ENCODE measurements at regions of chr2 and their contacts with region 1.

Region 1: GRCh38 chr2:127526149-127527000 is at the start of gene IWS1:
- DNase-seq: peak; percentile 96
- H3K4me3 Mint-ChIP-seq: peak within 1 kb of the TSS; percentile 86
- H3K27ac Mint-ChIP-seq: peak within 1 kb of the TSS; percentile 90
- H3K4me1 Mint-ChIP-seq: peaks cover 27% of the 10 kb centered on the region
- H3K27me3 Mint-ChIP-seq: no peaks in the 10 kb centered on the region
- total RNA-seq, gene IWS1: 52.1 to 52.5 TPM

Region 2: GRCh38 chr2:127106951-127107621 is 419.3 kb before region 1 on chr2 and contains the start of gene BIN1:
- CTCF ChIA-PET with region 1: no interaction called
- intact Hi-C with region 1: loop called (anchors 1 kb)
- DNase-seq: peak; percentile 83
- H3K4me3 Mint-ChIP-seq: peak within 1 kb of the TSS; percentile 72
- H3K27ac Mint-ChIP-seq: no peak within 1 kb of the TSS
- H3K4me1 Mint-ChIP-seq: peaks cover 3% of the 10 kb centered on the region
- H3K27me3 Mint-ChIP-seq: peaks cover 9% of the 10 kb centered on the region
- total RNA-seq, gene BIN1: 50.4 to 51.1 TPM

Region 3: GRCh38 chr2:127387655-127388422 is 138.5 kb before region 1 on chr2 and contains the start of gene MAP3K2:
- CTCF ChIA-PET with region 1: no interaction called
- intact Hi-C with region 1: loop called (anchors 1 kb)
- DNase-seq: peak; percentile 92
- H3K4me3 Mint-ChIP-seq: peak within 1 kb of the TSS; percentile 85
- H3K27ac Mint-ChIP-seq: peak within 1 kb of the TSS; percentile 92
- H3K4me1 Mint-ChIP-seq: peaks cover 69% of the 10 kb centered on the region
- H3K27me3 Mint-ChIP-seq: no peaks in the 10 kb centered on the region
- total RNA-seq, gene MAP3K2: 27.1 to 27.4 TPM

Region 4: GRCh38 chr2:127471286-127471988 is 54.9 kb before region 1 on chr2:
- CTCF ChIA-PET with region 1: no interaction called
- intact Hi-C with region 1: no loop called
- DNase-seq: no peak
- H3K4me3 Mint-ChIP-seq: no peak overlapping the region
- H3K27ac Mint-ChIP-seq: no peak overlapping the region
- H3K4me1 Mint-ChIP-seq: no peaks in the 10 kb centered on the region
- H3K27me3 Mint-ChIP-seq: no peaks in the 10 kb centered on the region

Region 5: GRCh38 chr2:127640082-127641072 is 114.0 kb after region 1 on chr2:
- CTCF ChIA-PET with region 1: no interaction called
- intact Hi-C with region 1: loop called (anchors 1 kb)
- DNase-seq: peak; percentile 65
- H3K4me3 Mint-ChIP-seq: peak overlapping the region; percentile 65
- H3K27ac Mint-ChIP-seq: peak overlapping the region; percentile 71
- H3K4me1 Mint-ChIP-seq: peaks cover 54% of the 10 kb centered on the region
- H3K27me3 Mint-ChIP-seq: no peaks in the 10 kb centered on the region

Region 6: GRCh38 chr2:127884436-127885345 is 358.3 kb after region 1 on chr2:
- CTCF ChIA-PET with region 1: no interaction called
- intact Hi-C with region 1: loop called (anchors 5 kb)
- DNase-seq: no peak
- H3K4me3 Mint-ChIP-seq: peak overlapping the region; percentile 86
- H3K27ac Mint-ChIP-seq: peak overlapping the region; percentile 71
- H3K4me1 Mint-ChIP-seq: peaks cover 60% of the 10 kb centered on the region
- H3K27me3 Mint-ChIP-seq: no peaks in the 10 kb centered on the region

Measured in activated naive CD4-positive, alpha-beta T cell treated with anti-CD3 and anti-CD28 coated beads for 36 hours (primary cell).